Activated T-helper 1 cell treated with anti-CD3 and anti-CD28 coated beads, Interleukin-12 subunit alpha, Interleukin-12 subunit beta, Interleukin-2, Interleukin-4 antibody, amounts not matched to agents 30 ng/mL and 10 ng/mL and 1 ng/mL, durations not matched to agents 14 hours and 24 hours and 36 hours (primary cell): ENCODE measurements at regions of chr2 and their contacts with region 1.

Region 1: DNA sequence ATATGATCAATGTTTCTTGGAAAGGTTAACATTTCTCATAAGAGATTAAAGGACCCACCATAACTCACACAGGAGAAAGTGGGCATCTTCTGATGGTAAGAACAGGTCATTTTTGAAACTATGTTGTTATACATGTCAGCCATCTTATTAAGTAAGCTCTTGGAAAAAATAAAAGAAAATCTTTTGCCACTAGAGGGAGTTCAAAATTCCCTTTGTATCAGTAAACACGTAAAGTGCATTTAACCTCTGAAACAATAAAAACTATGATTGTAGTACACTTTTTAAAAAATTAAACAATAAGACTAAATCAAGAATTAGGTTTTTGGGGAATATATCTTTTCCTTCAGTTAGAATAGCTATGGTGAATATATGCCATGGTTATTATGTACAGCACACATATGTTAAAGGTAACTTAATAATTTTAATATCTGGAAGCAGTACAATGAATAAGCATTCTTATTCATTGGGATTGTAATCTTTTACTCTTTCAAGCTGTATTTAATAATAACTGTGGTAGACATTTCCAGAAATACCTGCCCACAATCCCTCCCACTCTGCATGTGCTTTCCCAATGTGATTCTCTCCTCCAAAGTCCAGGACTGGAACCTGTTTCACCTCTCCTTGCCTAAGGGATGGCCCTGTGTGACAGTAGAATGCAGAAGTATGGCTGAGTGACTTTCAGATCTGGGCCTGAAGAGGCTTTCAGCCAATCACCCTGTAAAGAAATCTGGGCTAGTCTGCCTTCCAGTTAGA is 64.2 kb downstream of the RBMS1 start:
- DNase-seq: no peak
- H3K4me3 Mint-ChIP-seq: no peak overlapping the region
- H3K27ac Mint-ChIP-seq: no peak overlapping the region
- H3K4me1 Mint-ChIP-seq: peaks cover 66% of the 10 kb centered on the region
- H3K27me3 Mint-ChIP-seq: no peaks in the 10 kb centered on the region

Region 2: GRCh38 chr2:160229592-160229991 is 199.8 kb before region 1 on chr2:
- intact Hi-C with region 1: no loop called
- DNase-seq: no peak
- H3K4me3 Mint-ChIP-seq: no peak overlapping the region
- H3K27ac Mint-ChIP-seq: no peak overlapping the region
- H3K4me1 Mint-ChIP-seq: peaks cover 23% of the 10 kb centered on the region
- H3K27me3 Mint-ChIP-seq: peaks cover 7% of the 10 kb centered on the region

Region 3: GRCh38 chr2:160367887-160368286 is 61.5 kb before region 1 on chr2:
- intact Hi-C with region 1: no loop called
- DNase-seq: no peak
- H3K4me3 Mint-ChIP-seq: no peak overlapping the region
- H3K27ac Mint-ChIP-seq: no peak overlapping the region
- H3K4me1 Mint-ChIP-seq: peaks cover 46% of the 10 kb centered on the region
- H3K27me3 Mint-ChIP-seq: no peaks in the 10 kb centered on the region

Region 4: GRCh38 chr2:160406591-160407392 is 22.6 kb before region 1 on chr2:
- intact Hi-C with region 1: loop called (anchors 1 kb)
- DNase-seq: peak; percentile 66
- H3K4me3 Mint-ChIP-seq: peak overlapping the region; percentile 90
- H3K27ac Mint-ChIP-seq: peak overlapping the region; percentile 92
- H3K4me1 Mint-ChIP-seq: peaks cover 83% of the 10 kb centered on the region
- H3K27me3 Mint-ChIP-seq: no peaks in the 10 kb centered on the region

Region 5: GRCh38 chr2:160440888-160441287 is 11.5 kb after region 1 on chr2:
- intact Hi-C with region 1: no loop called
- DNase-seq: no peak
- H3K4me3 Mint-ChIP-seq: no peak overlapping the region
- H3K27ac Mint-ChIP-seq: no peak overlapping the region
- H3K4me1 Mint-ChIP-seq: peaks cover 5% of the 10 kb centered on the region
- H3K27me3 Mint-ChIP-seq: no peaks in the 10 kb centered on the region

Region 6: GRCh38 chr2:160465406-160465805 is 36.0 kb after region 1 on chr2:
- intact Hi-C with region 1: loop called (anchors 2 kb)
- DNase-seq: no peak
- H3K4me3 Mint-ChIP-seq: no peak overlapping the region
- H3K27ac Mint-ChIP-seq: no peak overlapping the region
- H3K4me1 Mint-ChIP-seq: peaks cover 38% of the 10 kb centered on the region
- H3K27me3 Mint-ChIP-seq: no peaks in the 10 kb centered on the region

Region 7: GRCh38 chr2:160482673-160483072 is 53.2 kb after region 1 on chr2:
- intact Hi-C with region 1: loop called (anchors 1 kb)
- DNase-seq: peak; percentile 11
- H3K4me3 Mint-ChIP-seq: peak overlapping the region; percentile 5
- H3K27ac Mint-ChIP-seq: peak overlapping the region; percentile 59
- H3K4me1 Mint-ChIP-seq: peaks cover 59% of the 10 kb centered on the region
- H3K27me3 Mint-ChIP-seq: no peaks in the 10 kb centered on the region

Region 8: GRCh38 chr2:160652236-160652635 is 222.8 kb after region 1 on chr2:
- intact Hi-C with region 1: loop called (anchors 5 kb)
- DNase-seq: peak; percentile 48
- H3K4me3 Mint-ChIP-seq: peak overlapping the region; percentile 4
- H3K27ac Mint-ChIP-seq: peak overlapping the region; percentile 27
- H3K4me1 Mint-ChIP-seq: peaks cover 20% of the 10 kb centered on the region
- H3K27me3 Mint-ChIP-seq: peaks cover 4% of the 10 kb centered on the region

Region 9: DNA sequence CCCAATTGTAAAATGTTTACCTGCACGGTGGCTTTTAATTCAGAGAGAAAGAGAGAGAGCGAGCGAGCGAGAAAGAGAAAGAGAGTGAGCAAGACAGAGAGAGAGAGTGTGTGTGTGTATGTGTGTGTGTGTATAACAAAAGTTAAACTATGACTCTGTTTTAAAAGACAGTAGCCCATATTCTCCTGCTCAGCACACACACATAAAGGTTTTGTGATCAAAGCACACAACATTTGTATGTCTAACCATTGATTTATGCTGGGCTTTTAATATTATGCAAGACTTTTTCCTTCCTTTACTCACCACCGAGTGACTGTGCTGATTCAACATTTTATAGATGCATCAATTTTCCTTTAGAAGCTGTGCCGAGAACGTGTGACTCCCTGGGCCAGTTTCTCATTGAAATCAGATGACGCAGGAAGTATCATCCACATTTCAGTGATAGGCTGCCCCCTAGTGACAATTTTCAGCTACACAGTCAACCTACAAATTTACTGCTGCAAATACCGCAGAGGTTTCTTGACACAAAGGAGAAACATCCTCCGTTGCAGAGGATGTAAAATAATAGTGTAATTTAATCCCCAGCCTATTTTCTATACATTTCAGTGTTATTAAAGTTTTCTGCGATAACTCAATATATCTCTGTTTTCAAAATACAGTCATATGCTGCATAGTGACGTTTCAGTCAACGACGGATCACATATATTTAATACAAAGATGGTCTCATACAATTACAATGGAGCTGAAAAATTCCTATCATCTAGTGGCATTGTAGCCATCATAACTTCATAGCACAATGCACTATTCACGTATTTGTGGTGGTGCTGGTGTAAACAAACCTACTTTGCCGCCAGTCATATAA is 564.9 kb after region 1 on chr2:
- intact Hi-C with region 1: loop called (anchors 5 kb)
- DNase-seq: peak; percentile 57
- H3K4me3 Mint-ChIP-seq: no peak overlapping the region
- H3K27ac Mint-ChIP-seq: no peak overlapping the region
- H3K4me1 Mint-ChIP-seq: peaks cover 11% of the 10 kb centered on the region
- H3K27me3 Mint-ChIP-seq: peaks cover 2% of the 10 kb centered on the region